Vagina (tissue), 2 donors: ENCODE measurements at regions of chr1 and their contacts with region 1.

Region 1: DNA sequence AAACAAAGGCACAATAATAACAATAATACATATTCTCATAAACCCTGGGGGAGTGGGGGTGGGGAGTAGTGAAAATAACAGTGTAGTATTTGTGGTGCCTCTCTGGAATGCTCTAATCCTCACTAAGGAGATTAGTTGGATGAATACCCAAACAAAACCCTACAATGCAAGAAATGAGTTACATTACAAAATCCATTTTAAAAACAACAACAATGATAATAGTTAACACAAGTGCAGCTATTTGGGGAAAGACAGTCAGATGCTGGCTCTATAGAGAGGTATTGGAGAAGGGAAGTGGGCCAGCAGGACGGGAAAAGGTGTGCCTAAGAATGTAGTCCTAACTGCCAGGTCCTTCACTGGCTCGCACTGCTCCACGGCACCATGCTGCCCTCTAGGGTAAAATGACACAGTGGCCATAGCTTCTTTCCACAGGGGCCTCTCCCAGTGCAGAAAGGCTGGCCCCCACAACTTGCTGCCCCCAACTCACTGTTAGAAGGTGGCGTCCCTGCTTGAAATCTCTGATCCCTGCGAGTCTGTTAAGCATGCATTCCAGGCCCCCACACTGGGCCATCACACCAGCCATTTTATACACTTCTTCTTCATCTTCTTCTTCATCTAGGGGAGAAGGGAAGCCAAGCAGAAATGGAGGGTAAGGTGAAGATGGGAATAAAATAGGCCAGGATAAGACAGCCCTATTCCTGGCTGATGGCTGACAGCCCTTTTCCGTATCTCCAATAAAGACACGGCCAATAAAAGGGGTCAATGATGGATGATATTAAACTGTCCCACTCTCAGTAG is 113.8 kb downstream of the UBR4 start:
- DNase-seq: no peak
- H3K4me3 ChIP-seq: no peak overlapping the region
- H3K27ac ChIP-seq: no peak overlapping the region
- H3K4me1 ChIP-seq: no peaks in the 10 kb centered on the region
- H3K27me3 ChIP-seq: no peaks in the 10 kb centered on the region
- CTCF ChIP-seq: peak in 2 of 3 experiments; percentile 28 to 32
- POLR2A ChIP-seq: no peak

Region 2: GRCh38 chr1:18902523-18903290 is 193.5 kb before region 1 on chr1 and contains the start of gene ALDH4A1:
- intact Hi-C with region 1: loop called (anchors 10 kb)
- DNase-seq: peak in 1 of 2 donors; percentile 99
- H3K4me3 ChIP-seq: peak within 1 kb of the TSS; percentile 66 to 75
- H3K27ac ChIP-seq: peak within 1 kb of the TSS; percentile 87
- H3K4me1 ChIP-seq: peaks cover 46% of the 10 kb centered on the region
- H3K27me3 ChIP-seq: no peaks in the 10 kb centered on the region
- CTCF ChIP-seq: no peak
- POLR2A ChIP-seq: peak in 1 of 2 donors; percentile 60
- total RNA-seq, gene ALDH4A1: 39.5 TPM

Region 3: DNA sequence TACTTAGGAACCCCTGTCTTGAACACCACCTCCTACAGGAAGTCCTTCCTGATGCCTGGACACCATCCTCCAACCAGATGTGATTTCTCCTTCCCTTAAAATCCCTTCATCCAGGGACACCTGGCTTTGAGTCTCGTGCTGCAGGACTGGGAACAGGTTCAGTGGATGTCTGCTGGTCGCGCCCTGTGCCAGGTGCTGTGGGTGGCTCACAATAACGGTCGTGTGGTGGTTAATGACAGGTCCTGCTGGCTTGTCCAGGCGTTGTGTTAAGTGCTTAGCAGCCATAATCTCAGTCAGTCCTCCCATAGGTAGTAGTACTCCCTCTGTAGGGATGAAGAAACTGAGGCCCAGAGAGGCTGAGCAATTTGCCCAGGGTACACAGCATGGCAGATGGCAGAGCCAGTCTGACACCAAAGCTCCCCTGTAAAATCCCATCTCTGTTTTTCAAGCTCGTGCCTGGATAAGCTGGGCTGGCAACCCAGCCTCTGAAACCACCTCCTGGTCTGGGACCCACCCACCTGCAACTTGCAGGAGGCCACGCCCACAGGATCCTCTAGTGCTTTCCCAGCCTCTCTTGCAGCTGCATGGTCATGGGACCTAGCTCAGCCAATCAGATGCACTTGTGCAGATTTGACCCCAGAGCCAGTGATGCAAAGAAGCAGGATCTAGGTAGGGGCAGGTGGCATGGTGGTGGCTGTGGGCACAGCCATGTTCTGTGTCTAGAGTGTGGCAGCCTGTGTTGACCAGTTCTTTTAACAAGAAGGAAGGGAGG is 33.8 kb before region 1 on chr1:
- intact Hi-C with region 1: no loop called
- DNase-seq: no peak
- H3K4me3 ChIP-seq: no peak overlapping the region
- H3K27ac ChIP-seq: no peak overlapping the region
- H3K4me1 ChIP-seq: peaks cover 20% of the 10 kb centered on the region
- H3K27me3 ChIP-seq: no peaks in the 10 kb centered on the region
- CTCF ChIP-seq: no peak
- POLR2A ChIP-seq: no peak

Region 4: DNA sequence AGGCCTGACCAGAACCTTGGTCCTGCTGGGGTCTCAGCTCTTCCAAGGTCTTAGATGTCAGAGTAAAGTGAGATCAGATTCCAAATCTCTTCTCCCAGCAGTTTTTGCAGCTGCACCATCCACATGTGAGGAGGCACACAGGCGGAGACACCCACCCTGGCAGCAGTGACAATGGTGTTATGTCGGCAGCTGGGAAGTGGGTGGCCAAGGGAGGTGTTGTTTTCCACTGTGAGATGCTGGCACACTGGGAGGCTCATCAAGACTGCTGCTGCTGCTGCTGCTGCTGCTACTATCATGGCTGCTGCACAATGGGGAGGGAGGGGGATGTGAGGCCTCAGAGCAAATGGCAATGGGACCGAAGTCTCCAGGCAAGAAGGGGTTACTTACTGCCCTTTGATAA is 1366.2 kb after region 1 on chr1:
- intact Hi-C with region 1: loop called (anchors 5 kb)
- DNase-seq: no peak
- H3K4me3 ChIP-seq: no peak overlapping the region
- H3K27ac ChIP-seq: no peak overlapping the region
- H3K4me1 ChIP-seq: no peaks in the 10 kb centered on the region
- H3K27me3 ChIP-seq: no peaks in the 10 kb centered on the region
- CTCF ChIP-seq: no peak
- POLR2A ChIP-seq: no peak